Activated CD4-positive, alpha-beta memory T cell treated with anti-CD3 and anti-CD28 coated beads for 36 hours (primary cell): ENCODE measurements at regions of chr21 and their contacts with region 1.

Region 1: GRCh38 chr21:28745131-28746016 is 247.3 kb downstream of the LTN1 start:
- DNase-seq: peak; percentile 80
- H3K4me3 Mint-ChIP-seq: no peak overlapping the region
- H3K27ac Mint-ChIP-seq: no peak overlapping the region
- H3K4me1 Mint-ChIP-seq: no peaks in the 10 kb centered on the region
- H3K27me3 Mint-ChIP-seq: no peaks in the 10 kb centered on the region

Region 2: DNA sequence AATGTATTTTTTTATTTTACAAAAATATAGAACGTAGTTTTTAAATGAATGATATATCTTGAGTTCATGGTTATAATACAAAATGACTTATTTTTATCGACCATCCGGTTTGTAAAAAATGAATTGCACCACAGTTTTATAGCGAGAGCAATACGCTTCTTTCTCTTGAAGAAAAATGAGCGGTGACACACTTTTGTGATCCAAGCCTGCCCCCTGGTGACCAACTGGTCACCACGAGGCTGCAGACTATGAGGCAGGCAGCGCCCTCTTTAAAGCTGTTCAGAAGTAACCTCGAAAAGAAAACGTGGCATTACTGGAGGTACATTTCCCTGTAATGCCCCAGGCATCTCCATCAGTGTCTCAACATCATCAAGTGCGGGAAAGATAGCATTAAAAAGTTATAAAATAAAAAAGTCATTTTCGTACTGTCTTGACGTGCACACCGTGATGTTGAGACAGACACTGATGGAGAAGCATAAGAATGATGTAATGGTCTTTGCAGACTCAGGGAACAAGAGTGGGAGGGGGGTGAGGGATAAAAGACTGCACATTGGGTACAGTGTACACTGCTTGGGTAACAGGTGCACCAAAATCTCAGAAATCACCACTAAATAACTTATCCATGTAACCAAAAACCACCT is 1044.3 kb before region 1 on chr21:
- CTCF ChIA-PET with region 1: interaction called, 8 read pairs
- POLR2A ChIA-PET with region 1: no interaction called
- intact Hi-C with region 1: loop called (anchors 1 kb)
- DNase-seq: peak; percentile 73
- H3K4me3 Mint-ChIP-seq: no peak overlapping the region
- H3K27ac Mint-ChIP-seq: no peak overlapping the region
- H3K4me1 Mint-ChIP-seq: no peaks in the 10 kb centered on the region
- H3K27me3 Mint-ChIP-seq: no peaks in the 10 kb centered on the region

Region 3: GRCh38 chr21:28516991-28517592 is 228.3 kb before region 1 on chr21:
- CTCF ChIA-PET with region 1: interaction called, 248 read pairs
- POLR2A ChIA-PET with region 1: interaction called, 3 read pairs
- intact Hi-C with region 1: loop called (anchors 1 kb)
- DNase-seq: peak; percentile 77
- H3K4me3 Mint-ChIP-seq: no peak overlapping the region
- H3K27ac Mint-ChIP-seq: no peak overlapping the region
- H3K4me1 Mint-ChIP-seq: no peaks in the 10 kb centered on the region
- H3K27me3 Mint-ChIP-seq: peaks cover 1% of the 10 kb centered on the region

Region 4: GRCh38 chr21:28561772-28562171 is 183.6 kb before region 1 on chr21:
- CTCF ChIA-PET with region 1: no interaction called
- POLR2A ChIA-PET with region 1: no interaction called
- intact Hi-C with region 1: no loop called
- DNase-seq: no peak
- H3K4me3 Mint-ChIP-seq: no peak overlapping the region
- H3K27ac Mint-ChIP-seq: no peak overlapping the region
- H3K4me1 Mint-ChIP-seq: peaks cover 16% of the 10 kb centered on the region
- H3K27me3 Mint-ChIP-seq: no peaks in the 10 kb centered on the region

Region 5: GRCh38 chr21:28633839-28634555 is 111.4 kb before region 1 on chr21:
- CTCF ChIA-PET with region 1: interaction called, 11 read pairs
- POLR2A ChIA-PET with region 1: no interaction called
- intact Hi-C with region 1: no loop called
- DNase-seq: peak; percentile 33
- H3K4me3 Mint-ChIP-seq: no peak overlapping the region
- H3K27ac Mint-ChIP-seq: no peak overlapping the region
- H3K4me1 Mint-ChIP-seq: peaks cover 20% of the 10 kb centered on the region
- H3K27me3 Mint-ChIP-seq: no peaks in the 10 kb centered on the region

Region 6: GRCh38 chr21:28731700-28732321 is 13.6 kb before region 1 on chr21:
- CTCF ChIA-PET with region 1: interaction called, 54 read pairs
- POLR2A ChIA-PET with region 1: interaction called, 3 read pairs
- intact Hi-C with region 1: no loop called
- DNase-seq: no peak
- H3K4me3 Mint-ChIP-seq: no peak overlapping the region
- H3K27ac Mint-ChIP-seq: no peak overlapping the region
- H3K4me1 Mint-ChIP-seq: no peaks in the 10 kb centered on the region
- H3K27me3 Mint-ChIP-seq: no peaks in the 10 kb centered on the region

Region 7: GRCh38 chr21:28781602-28782276 is 36.4 kb after region 1 on chr21:
- CTCF ChIA-PET with region 1: interaction called, 32 read pairs
- POLR2A ChIA-PET with region 1: no interaction called
- intact Hi-C with region 1: no loop called
- DNase-seq: no peak
- H3K4me3 Mint-ChIP-seq: no peak overlapping the region
- H3K27ac Mint-ChIP-seq: no peak overlapping the region
- H3K4me1 Mint-ChIP-seq: peaks cover 1% of the 10 kb centered on the region
- H3K27me3 Mint-ChIP-seq: no peaks in the 10 kb centered on the region